A549 (cell line): ENCODE measurements at regions of chr6 and their contacts with region 1.

Region 1: GRCh38 chr6:138814179-138814834 is 18.4 kb downstream of the ECT2L start:
- DNase-seq: no peak
- ATAC-seq: no peak
- H3K4me3 ChIP-seq: no peak overlapping the region
- H3K27ac ChIP-seq: no peak overlapping the region
- H3K4me1 ChIP-seq: no peaks in the 10 kb centered on the region
- CTCF ChIP-seq: no peak
- EP300 ChIP-seq: no peak
- POLR2A ChIP-seq: no peak
- RAD21 ChIP-seq: no peak

Region 2: DNA sequence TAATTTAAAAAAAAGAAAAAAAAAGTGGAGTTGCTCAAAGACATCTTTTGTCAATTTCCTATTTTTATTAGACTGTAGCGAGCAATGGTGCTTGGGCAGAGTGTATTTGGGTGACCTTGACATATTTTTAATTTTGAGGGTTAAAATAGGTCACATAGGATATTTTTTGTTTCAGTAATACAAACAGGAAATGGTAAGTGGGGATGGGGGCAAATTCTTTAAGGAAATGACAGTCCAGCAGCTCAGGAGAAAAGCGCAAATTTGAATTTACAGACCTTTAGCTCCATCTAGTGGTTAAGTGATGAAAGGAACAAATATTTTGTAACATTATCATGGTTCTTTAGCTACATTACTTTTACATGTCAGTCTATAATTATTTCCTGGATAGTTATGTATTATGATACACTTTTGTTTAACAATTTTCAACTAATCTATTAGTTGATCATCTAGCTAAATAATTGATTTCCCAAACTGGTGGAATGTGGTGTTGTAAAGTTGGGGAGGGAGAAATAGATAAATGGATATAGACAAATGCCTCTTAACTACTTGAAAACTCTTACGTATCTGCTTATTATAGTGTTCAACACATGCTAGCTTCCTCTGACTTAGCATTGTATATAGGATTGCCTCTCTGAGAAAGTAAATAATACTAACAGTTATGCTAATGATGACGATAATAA is 550.1 kb after region 1 on chr6:
- CTCF ChIA-PET with region 1: interaction called, 16 read pairs
- POLR2A ChIA-PET with region 1: no interaction called
- DNase-seq: peak; percentile 23 to 27
- ATAC-seq: peak in 1 of 2 experiments; percentile 65; a peak in 2 of 6 replicates
- H3K4me3 ChIP-seq: no peak overlapping the region
- H3K27ac ChIP-seq: no peak overlapping the region
- H3K4me1 ChIP-seq: peaks cover 7% of the 10 kb centered on the region; the same call in 2 of the 3 replicates
- CTCF ChIP-seq: peak; percentile 77
- EP300 ChIP-seq: no peak
- POLR2A ChIP-seq: no peak
- RAD21 ChIP-seq: peak; percentile 78 to 86